Naive thymus-derived CD4-positive, alpha-beta T cell (primary cell): ENCODE measurements at regions of chr22 and their contacts with region 1.

Region 1: DNA sequence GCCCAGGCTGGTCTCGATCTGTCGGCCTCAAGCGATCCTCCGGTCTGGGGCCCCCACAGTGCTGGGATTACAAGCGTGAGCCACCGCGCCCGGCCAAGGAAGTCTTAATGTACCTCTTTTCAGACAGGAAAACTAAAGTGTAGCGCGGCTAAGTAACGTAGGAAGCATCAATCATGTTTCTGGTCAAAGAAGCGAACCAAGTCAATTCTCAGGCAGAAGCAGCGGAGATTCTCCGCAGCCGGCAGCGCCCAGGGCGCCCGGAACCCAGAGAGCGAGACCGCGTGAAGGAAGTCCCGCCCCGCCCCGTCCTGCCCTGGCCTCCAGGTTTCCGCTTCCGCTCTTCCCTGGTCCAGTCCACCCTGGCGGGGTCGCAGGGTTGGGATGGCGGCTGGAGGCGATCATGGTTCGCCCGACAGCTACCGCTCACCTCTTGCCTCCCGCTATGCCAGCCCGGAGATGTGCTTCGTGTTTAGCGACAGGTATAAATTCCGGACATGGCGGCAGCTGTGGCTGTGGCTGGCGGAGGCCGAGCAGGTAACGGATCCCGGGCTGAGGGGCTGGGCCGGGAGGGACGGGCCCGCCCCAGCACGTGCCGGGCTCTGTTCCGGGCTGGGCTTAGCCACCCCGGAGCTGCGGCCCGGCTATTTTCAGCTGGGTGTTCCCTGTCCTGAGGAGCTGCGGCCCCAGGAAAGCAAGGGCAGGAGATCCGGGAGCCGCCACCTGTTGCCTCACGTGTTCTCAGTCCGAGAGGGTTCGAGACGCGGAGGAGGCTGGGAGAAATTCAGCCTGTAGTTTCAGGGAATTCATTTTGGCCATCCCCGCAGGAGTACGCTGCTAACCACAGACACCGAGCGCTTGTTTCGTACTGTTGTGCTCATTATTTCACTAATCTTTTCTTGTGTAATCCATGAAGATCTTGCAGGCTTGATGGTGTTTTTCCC is at the start of gene ADSL:
- DNase-seq: peak; percentile 70 to 88 (median 81)
- ATAC-seq: peak; percentile 92
- H3K4me3 ChIP-seq: peak within 1 kb of the TSS; percentile 98
- H3K4me3 Mint-ChIP-seq: peak within 1 kb of the TSS; percentile 93 to 99 (median 98)
- H3K27ac ChIP-seq: peak within 1 kb of the TSS; percentile 83
- H3K27ac Mint-ChIP-seq: peak within 1 kb of the TSS; percentile 92 to 99 (median 98)
- H3K4me1 ChIP-seq: peaks cover 37 to 53% of the 10 kb centered on the region in 2 donors
- H3K4me1 Mint-ChIP-seq: peaks cover 36 to 69% (median 49%) of the 10 kb centered on the region in 7 donors
- H3K27me3 ChIP-seq: no peaks in the 10 kb centered on the region
- H3K27me3 Mint-ChIP-seq: no peaks in the 10 kb centered on the region
- total RNA-seq, gene ADSL: 54.4 to 127 (median 61.9) TPM

Region 2: GRCh38 chr22:39900306-39901227 is 445.9 kb before region 1 on chr22 and contains the start of gene GRAP2:
- CTCF ChIA-PET with region 1: no interaction called
- POLR2A ChIA-PET with region 1: no interaction called
- intact Hi-C with region 1: loop called in 1 of 2 experiments (anchors 2 kb)
- DNase-seq: peak in 8 of 9 donors; percentile 52 to 90 (median 86)
- ATAC-seq: peak; percentile 98
- H3K4me3 ChIP-seq: peak within 1 kb of the TSS; percentile 71
- H3K4me3 Mint-ChIP-seq: peak within 1 kb of the TSS in 9 of 10 donors; percentile 95 to 99 (median 97)
- H3K27ac ChIP-seq: peak within 1 kb of the TSS; percentile 83
- H3K27ac Mint-ChIP-seq: peak within 1 kb of the TSS in 6 of 9 donors; percentile 86 to 99 (median 96)
- H3K4me1 ChIP-seq: peaks cover 23 to 27% of the 10 kb centered on the region in 2 donors
- H3K4me1 Mint-ChIP-seq: peaks cover 13 to 31% (median 22%) of the 10 kb centered on the region in 7 donors
- H3K27me3 ChIP-seq: no peaks in the 10 kb centered on the region
- H3K27me3 Mint-ChIP-seq: no peaks in the 10 kb centered on the region
- total RNA-seq, gene GRAP2: 108 to 156 (median 145) TPM

Region 3: DNA sequence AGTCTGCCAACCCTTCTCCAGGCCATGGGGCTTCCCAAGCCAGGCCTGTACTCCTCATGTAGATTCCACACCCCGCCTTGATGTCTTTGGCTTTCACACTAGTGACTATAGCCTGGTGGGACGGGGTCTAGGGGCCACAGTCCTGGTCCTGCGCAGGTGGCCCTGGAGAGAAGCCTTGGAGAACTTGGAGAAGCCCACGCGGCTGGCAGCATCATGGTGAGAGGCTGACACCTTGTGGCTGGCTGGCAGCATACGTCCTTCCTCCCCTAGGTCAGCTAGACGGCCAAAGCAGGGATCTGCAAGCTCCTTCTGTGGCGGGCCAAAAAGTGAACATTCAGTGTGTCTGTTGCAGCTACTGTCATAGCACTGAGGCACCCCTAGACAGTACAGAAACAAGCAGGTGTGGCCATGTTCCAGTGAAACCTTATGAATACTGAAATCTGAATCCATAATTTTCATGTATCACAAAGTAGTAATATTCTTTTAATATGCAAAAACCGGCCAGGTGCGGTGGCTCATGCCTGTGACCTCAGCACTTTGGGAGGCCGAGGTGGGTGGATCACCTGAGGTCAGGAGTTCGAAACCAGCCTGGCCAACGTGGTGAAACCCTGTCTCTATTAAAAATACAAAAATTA is 309.7 kb before region 1 on chr22:
- CTCF ChIA-PET with region 1: interaction called, 4 read pairs
- POLR2A ChIA-PET with region 1: no interaction called
- intact Hi-C with region 1: loop called in 1 of 2 experiments (anchors 2 kb)
- DNase-seq: peak in 7 of 9 donors; percentile 26 to 56 (median 48)
- ATAC-seq: peak; percentile 81
- H3K4me3 ChIP-seq: no peak overlapping the region
- H3K4me3 Mint-ChIP-seq: no peak overlapping the region
- H3K27ac ChIP-seq: no peak overlapping the region
- H3K27ac Mint-ChIP-seq: no peak overlapping the region
- H3K4me1 ChIP-seq: no peaks in the 10 kb centered on the region
- H3K4me1 Mint-ChIP-seq: peaks cover 0 to 7% (median 6%) of the 10 kb centered on the region in 7 donors
- H3K27me3 ChIP-seq: peaks cover 0 to 3% of the 10 kb centered on the region in 2 donors
- H3K27me3 Mint-ChIP-seq: peaks cover 3 to 25% (median 15%) of the 10 kb centered on the region in 5 donors

Region 4: DNA sequence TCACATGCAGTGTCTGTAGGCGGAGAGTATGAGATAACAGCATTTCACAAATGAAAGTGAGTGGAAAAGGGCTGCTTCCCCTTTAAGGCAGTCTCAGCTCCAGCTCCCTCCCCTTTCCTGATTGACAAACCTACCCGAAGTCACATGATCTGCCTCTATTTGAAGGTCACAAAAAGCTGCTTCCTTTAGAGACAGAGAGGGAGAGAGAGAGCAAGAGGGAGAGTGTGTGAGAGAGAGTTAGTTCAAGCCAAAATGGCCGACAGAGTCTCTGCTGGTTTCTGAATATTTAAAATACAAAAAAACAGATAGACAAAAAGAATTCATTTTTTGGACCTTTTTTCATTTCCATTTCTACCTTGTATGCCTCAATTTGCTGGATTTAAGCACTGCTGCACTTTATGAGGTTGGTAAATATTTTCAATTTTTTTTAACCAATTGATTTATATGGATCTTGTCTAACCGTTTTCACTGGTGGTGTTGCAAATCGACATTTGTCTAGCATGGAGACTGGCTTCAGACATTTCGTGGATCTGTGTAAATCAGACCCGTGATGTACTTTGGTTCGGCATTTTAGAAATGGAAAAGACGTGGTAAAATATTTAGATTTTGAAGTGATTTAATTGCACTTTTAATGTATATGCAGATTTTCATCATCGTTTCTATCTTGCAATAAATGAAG is 168.6 kb before region 1 on chr22 and contains the start of gene TNRC6B:
- CTCF ChIA-PET with region 1: interaction called, 14 read pairs
- POLR2A ChIA-PET with region 1: interaction called, 34 read pairs
- intact Hi-C with region 1: loop called (anchors 1 kb)
- DNase-seq: peak in 8 of 9 donors; percentile 68 to 95 (median 90)
- ATAC-seq: peak; percentile 98
- H3K4me3 ChIP-seq: peak within 1 kb of the TSS; percentile 72
- H3K4me3 Mint-ChIP-seq: peak within 1 kb of the TSS; percentile 80 to 97 (median 90)
- H3K27ac ChIP-seq: peak within 1 kb of the TSS; percentile 71
- H3K27ac Mint-ChIP-seq: peak within 1 kb of the TSS; percentile 85 to 94 (median 91)
- H3K4me1 ChIP-seq: peaks cover 35 to 44% of the 10 kb centered on the region in 2 donors
- H3K4me1 Mint-ChIP-seq: peaks cover 38 to 77% (median 63%) of the 10 kb centered on the region in 7 donors
- H3K27me3 ChIP-seq: no peaks in the 10 kb centered on the region
- H3K27me3 Mint-ChIP-seq: no peaks in the 10 kb centered on the region
- total RNA-seq, gene TNRC6B: 67.4 to 165 (median 146) TPM

Region 5: DNA sequence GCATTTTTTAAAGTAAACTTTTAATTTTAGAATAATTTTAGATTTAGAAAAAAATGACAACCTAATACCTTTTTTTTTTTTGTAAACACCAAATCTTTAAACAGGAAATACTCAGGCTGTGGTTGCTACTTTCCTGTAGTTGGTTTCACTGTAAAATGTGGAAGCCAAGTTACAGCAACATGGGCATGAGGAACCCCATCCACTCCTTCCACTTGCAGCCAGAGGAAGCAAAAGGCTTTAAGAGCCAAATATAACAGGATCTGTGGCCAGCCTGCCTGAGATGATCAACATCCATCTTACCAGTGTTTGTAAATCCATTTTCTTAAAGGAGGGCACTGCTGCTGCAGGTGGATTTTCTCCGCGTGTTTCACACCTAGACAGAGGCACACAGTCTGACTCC is 102.6 kb before region 1 on chr22:
- CTCF ChIA-PET with region 1: interaction called, 3 read pairs
- POLR2A ChIA-PET with region 1: interaction called, 8 read pairs
- intact Hi-C with region 1: loop called (anchors 2 kb)
- DNase-seq: peak in 5 of 9 donors; percentile 23 to 45 (median 37)
- ATAC-seq: no peak
- H3K4me3 ChIP-seq: no peak overlapping the region
- H3K4me3 Mint-ChIP-seq: peak overlapping the region; percentile 52 to 81 (median 64)
- H3K27ac ChIP-seq: no peak overlapping the region
- H3K27ac Mint-ChIP-seq: peak overlapping the region; percentile 40 to 91 (median 81)
- H3K4me1 ChIP-seq: peaks cover 61 to 71% of the 10 kb centered on the region in 2 donors
- H3K4me1 Mint-ChIP-seq: peaks cover 64 to 96% (median 89%) of the 10 kb centered on the region in 7 donors
- H3K27me3 ChIP-seq: no peaks in the 10 kb centered on the region
- H3K27me3 Mint-ChIP-seq: no peaks in the 10 kb centered on the region

Region 6: GRCh38 chr22:40310081-40310767 is 36.2 kb before region 1 on chr22:
- CTCF ChIA-PET with region 1: interaction called, 6 read pairs
- POLR2A ChIA-PET with region 1: interaction called, 17 read pairs
- intact Hi-C with region 1: loop called in 1 of 2 experiments (anchors 5 kb)
- DNase-seq: no peak
- ATAC-seq: no peak
- H3K4me3 ChIP-seq: no peak overlapping the region
- H3K4me3 Mint-ChIP-seq: no peak overlapping the region
- H3K27ac ChIP-seq: no peak overlapping the region
- H3K27ac Mint-ChIP-seq: peak overlapping the region in 8 of 9 donors; percentile 16 to 86 (median 69)
- H3K4me1 ChIP-seq: peaks cover 0 to 29% of the 10 kb centered on the region in 2 donors
- H3K4me1 Mint-ChIP-seq: peaks cover 24 to 56% (median 49%) of the 10 kb centered on the region in 7 donors
- H3K27me3 ChIP-seq: no peaks in the 10 kb centered on the region
- H3K27me3 Mint-ChIP-seq: no peaks in the 10 kb centered on the region

Region 7: DNA sequence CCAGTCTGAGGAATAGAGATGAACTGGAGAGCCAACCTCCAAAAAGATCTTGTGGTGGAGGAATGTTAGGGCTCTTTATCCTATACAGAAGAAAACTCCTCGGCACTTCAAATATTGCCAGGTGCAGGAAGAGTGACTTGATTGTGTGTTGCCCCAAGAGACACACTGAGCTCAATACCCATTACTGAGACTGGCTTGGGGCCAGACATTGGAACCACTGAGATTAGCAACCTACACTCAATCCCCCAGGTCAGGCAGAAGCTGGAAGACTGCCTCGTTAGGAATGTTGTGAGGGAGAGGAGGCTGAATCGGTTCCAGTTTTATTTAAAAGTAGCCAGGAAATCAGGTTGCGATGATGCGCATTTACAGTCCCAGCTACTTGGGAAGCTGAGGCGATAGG is 21.6 kb after region 1 on chr22:
- CTCF ChIA-PET with region 1: interaction called, 3 read pairs
- POLR2A ChIA-PET with region 1: interaction called, 3 read pairs
- intact Hi-C with region 1: loop called in 1 of 2 experiments (anchors 1 kb)
- DNase-seq: no peak
- ATAC-seq: no peak
- H3K4me3 ChIP-seq: no peak overlapping the region
- H3K4me3 Mint-ChIP-seq: peak overlapping the region in 2 of 10 donors; percentile 17 to 33
- H3K27ac ChIP-seq: no peak overlapping the region
- H3K27ac Mint-ChIP-seq: peak overlapping the region in 1 of 9 donors; percentile 41
- H3K4me1 ChIP-seq: peaks cover 3 to 13% of the 10 kb centered on the region in 2 donors
- H3K4me1 Mint-ChIP-seq: peaks cover 12 to 23% (median 17%) of the 10 kb centered on the region in 7 donors
- H3K27me3 ChIP-seq: no peaks in the 10 kb centered on the region
- H3K27me3 Mint-ChIP-seq: no peaks in the 10 kb centered on the region